ENCODE measurements at regions of chr11 and their contacts with region 1.

Region 1: DNA sequence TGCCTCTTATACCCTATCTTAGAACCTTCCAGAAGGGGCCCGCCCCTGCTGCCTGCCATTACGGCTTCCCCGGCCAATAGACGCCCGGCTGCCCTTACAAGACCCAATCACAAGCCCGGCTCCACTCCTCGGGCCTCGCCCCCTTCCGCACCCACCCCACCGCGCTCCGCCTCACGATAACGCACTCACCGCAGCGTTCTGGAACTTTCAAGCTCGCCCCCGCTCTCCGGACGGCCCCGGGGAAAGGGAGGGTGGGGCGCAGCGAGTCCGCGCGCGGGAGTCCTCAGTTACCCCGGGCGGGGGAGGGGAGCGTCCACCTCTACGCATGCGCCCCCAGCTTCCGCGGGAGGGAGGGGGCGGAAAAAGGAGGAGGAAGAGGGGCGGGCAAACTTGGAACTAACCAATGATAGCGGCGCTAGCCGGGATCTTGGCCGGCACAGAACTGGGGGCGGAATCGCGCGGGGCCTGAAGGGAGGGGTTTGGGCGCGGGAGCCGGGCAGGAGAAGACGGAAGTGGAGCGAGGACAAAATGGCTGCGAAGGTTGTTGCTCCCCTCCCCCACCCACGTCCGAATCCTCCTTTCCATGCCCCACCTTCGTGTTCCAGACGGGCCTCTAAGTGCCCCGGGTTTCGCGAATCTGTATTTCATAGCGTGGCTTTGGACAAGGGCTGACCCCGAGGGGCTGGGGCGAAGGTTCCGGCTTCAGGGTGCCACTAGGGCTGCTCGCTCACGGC is 389 bp upstream of the HSPA8 start:
- DNase-seq: peak; percentile 99
- H3K4me3 Mint-ChIP-seq: peak overlapping the region; percentile 100
- H3K27ac Mint-ChIP-seq: peak overlapping the region; percentile 98
- H3K4me1 Mint-ChIP-seq: peaks cover 39% of the 10 kb centered on the region
- H3K27me3 Mint-ChIP-seq: no peaks in the 10 kb centered on the region

Region 2: GRCh38 chr11:121464352-121464946 is 1597.9 kb before region 1 on chr11:
- intact Hi-C with region 1: loop called (anchors 10 kb)
- DNase-seq: peak; percentile 73
- H3K4me3 Mint-ChIP-seq: peak overlapping the region; percentile 11
- H3K27ac Mint-ChIP-seq: peak overlapping the region; percentile 92
- H3K4me1 Mint-ChIP-seq: peaks cover 86% of the 10 kb centered on the region
- H3K27me3 Mint-ChIP-seq: no peaks in the 10 kb centered on the region

Region 3: DNA sequence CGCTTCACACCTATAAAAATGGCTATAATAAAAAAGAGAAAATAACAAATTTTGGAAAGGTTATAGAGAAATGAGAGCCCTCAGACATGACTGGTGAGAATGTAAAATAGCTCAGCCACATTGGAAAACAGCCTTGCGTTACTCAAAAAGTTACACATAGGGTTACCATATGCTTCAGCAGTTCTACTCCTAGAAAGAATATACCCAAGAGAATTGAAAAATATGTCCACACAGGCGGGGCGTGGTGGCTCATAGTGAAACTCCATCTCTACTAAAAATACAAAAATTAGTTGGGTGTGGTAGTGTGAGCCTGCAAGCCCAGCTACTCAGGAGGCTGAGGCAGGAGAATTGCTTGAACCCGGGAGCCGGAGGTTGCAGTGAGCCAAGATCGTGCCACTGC is 187.3 kb before region 1 on chr11:
- intact Hi-C with region 1: no loop called
- DNase-seq: no peak
- H3K4me3 Mint-ChIP-seq: no peak overlapping the region
- H3K27ac Mint-ChIP-seq: no peak overlapping the region
- H3K4me1 Mint-ChIP-seq: peaks cover 8% of the 10 kb centered on the region
- H3K27me3 Mint-ChIP-seq: peaks cover 6% of the 10 kb centered on the region

Region 4: DNA sequence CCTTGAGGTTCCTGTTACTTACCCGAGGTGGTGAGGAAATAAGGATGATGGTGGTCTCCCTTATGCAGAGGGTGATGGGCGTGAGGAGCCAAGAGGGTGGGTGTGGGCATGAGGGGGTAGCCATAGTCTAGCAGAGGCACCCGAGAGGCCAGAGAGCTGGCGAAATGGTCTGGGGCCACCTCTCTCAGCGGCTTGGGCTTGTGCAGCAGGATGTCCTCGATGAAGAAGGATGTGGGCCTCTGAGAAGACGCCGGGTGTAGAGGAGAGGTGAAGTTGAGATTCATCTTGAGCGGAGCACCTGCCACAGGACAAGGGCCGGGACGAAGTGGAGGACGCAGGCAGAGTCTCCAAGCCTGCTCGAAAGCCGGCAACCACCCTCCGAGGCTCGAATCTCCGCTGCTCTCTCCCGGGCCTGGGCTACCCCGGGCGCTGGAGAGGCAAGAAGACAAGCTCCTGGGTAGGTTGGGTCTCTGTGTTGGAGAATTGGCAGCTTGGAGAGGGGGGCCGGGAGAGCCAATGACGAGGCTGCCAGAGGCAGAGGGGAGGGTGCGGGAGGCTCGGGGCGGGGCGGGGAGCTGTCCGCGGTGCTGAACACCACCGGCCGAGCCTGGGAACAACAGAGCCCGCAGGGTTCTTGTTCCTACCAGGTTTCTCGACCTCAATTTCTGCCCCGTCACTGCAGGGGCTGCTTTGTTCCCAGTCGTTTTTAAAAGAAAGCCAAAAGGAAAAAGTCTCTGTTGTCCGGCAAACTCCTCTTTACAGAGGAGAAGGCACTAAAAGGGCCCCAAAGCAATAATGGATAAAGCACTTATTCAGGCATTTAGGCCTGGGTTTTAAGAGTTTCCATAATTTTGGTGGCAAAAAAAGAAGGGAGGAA is 80.7 kb before region 1 on chr11 and contains the start of gene BSX:
- intact Hi-C with region 1: loop called (anchors 2 kb)
- DNase-seq: peak; percentile 40
- H3K4me3 Mint-ChIP-seq: no peak within 1 kb of the TSS
- H3K27ac Mint-ChIP-seq: no peak within 1 kb of the TSS
- H3K4me1 Mint-ChIP-seq: peaks cover 10% of the 10 kb centered on the region
- H3K27me3 Mint-ChIP-seq: peaks cover 89% of the 10 kb centered on the region
- total RNA-seq, gene BSX: not detected in 2 replicates

Region 5: GRCh38 chr11:122998727-122999366 is 63.5 kb before region 1 on chr11:
- intact Hi-C with region 1: no loop called
- DNase-seq: no peak
- H3K4me3 Mint-ChIP-seq: no peak overlapping the region
- H3K27ac Mint-ChIP-seq: no peak overlapping the region
- H3K4me1 Mint-ChIP-seq: no peaks in the 10 kb centered on the region
- H3K27me3 Mint-ChIP-seq: peaks cover 28% of the 10 kb centered on the region

Region 6: DNA sequence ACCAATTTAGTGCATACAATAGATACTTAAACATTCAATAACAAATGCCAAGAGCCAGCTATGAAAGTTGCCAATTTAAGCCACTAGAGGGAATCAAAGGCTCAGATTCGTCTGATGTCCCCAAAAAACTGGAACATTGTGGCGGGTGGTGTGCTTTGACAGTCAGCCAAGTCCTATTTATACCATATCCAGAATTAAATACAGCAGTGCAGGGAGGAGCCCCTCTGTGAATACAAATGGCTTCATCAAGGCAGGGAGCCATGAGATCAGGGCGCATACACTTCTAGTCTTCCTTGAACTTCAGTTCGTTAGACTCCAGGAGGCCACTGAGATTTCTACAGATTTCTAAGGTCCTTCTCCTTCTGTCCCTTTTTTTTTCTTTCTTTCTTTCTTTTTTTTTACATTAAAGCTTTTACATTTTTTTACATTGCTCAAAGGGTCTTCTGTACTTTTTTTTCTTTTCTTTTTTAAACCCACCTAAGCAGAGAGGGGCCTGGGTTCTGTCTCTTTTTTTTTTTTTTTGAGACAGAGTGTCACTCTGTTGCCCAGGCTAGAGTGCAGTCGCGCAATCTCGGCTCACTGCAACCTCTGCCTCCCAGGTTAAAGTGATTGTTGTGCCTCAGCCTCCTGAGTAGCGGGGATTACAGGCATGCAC is 41.1 kb after region 1 on chr11:
- intact Hi-C with region 1: loop called (anchors 1 kb)
- DNase-seq: no peak
- H3K4me3 Mint-ChIP-seq: no peak overlapping the region
- H3K27ac Mint-ChIP-seq: no peak overlapping the region
- H3K4me1 Mint-ChIP-seq: peaks cover 9% of the 10 kb centered on the region
- H3K27me3 Mint-ChIP-seq: peaks cover 10% of the 10 kb centered on the region

Region 7: GRCh38 chr11:123137431-123138224 is 75.3 kb after region 1 on chr11:
- intact Hi-C with region 1: no loop called
- DNase-seq: no peak
- H3K4me3 Mint-ChIP-seq: no peak overlapping the region
- H3K27ac Mint-ChIP-seq: no peak overlapping the region
- H3K4me1 Mint-ChIP-seq: no peaks in the 10 kb centered on the region
- H3K27me3 Mint-ChIP-seq: no peaks in the 10 kb centered on the region

Region 8: DNA sequence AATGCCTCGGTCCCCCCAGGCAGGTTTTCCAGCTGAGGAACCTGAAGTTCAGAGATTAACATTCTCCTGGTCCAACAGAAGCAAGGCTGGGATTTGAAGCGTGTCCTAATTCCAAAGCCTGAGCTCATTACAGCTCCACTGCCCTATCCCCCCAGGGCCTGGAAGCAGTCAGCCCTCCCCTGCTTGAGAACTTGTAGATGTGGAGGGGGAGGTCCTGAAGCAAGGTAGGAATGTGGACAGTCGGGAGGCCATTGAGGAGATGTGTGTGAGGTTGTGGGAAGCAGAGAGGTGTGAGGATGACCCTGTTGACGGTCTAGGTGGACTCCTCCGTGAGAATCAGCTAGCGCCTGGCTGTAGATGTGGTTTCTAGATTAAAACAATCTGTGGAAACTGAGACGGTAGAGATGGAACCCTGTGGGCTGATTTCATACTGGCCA is 375.9 kb after region 1 on chr11:
- intact Hi-C with region 1: loop called (anchors 5 kb)
- DNase-seq: no peak
- H3K4me3 Mint-ChIP-seq: peak overlapping the region; percentile 42
- H3K27ac Mint-ChIP-seq: peak overlapping the region; percentile 79
- H3K4me1 Mint-ChIP-seq: peaks cover 81% of the 10 kb centered on the region
- H3K27me3 Mint-ChIP-seq: no peaks in the 10 kb centered on the region

Region 9: DNA sequence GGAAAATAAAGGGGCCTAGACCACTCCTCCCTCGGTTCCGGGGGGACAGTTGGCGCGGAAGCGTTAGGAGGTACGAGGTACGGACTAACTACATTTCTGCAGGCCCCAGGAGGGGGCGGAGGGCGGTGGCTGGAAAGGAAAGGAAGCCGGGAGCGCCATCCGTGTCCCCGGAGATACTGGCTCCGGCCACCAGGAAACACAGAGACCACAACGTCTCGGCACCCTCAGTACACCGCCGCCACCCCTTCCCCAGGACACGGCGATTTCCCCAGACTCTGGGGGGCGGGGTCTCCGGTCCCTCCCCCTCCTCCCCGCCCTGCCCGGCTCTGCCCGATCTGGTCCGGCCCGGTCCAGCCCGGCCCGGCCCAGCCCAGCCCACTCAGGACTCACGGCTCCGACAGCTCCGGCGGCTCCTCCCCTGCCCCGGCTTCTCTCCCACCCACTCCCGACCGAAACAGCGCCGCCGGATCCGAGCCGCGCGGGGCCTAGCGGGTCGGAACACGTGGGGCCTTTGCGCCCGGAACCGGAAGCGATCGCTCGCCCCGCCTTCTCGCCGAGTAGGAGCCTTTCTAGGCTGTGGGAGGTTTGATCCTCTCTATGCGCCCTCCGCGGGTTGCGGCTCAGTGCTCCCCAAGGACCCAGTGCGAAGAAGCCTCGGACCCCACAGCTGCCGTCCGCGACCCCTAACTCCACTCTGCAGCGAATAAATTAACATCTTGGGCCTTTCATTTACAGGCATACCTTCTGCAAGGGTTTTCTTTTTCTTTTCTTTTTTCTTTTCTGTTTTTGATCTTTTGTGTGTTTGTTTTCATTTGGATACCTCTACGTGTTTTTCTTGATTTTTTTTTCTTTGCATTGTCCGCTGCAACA is 679.1 kb after region 1 on chr11 and contains the start of gene ZNF202:
- intact Hi-C with region 1: loop called (anchors 1 kb)
- DNase-seq: peak; percentile 86
- H3K4me3 Mint-ChIP-seq: peak within 1 kb of the TSS; percentile 89
- H3K27ac Mint-ChIP-seq: peak within 1 kb of the TSS; percentile 87
- H3K4me1 Mint-ChIP-seq: peaks cover 33% of the 10 kb centered on the region
- H3K27me3 Mint-ChIP-seq: peaks cover 10% of the 10 kb centered on the region
- total RNA-seq, gene ZNF202: 19.2 and 22.3 TPM in 2 replicates